ENCODE measurements at regions of chr13 and their contacts with region 1.

Region 1: GRCh38 chr13:42110410-42111155 is 62.1 kb downstream of the DGKH start:
- DNase-seq: no peak
- H3K4me3 ChIP-seq: no peak overlapping the region
- H3K27ac ChIP-seq: no peak overlapping the region
- H3K4me1 ChIP-seq: peaks cover 0 to 25% (median 6%) of the 10 kb centered on the region in 4 donors
- H3K27me3 ChIP-seq: no peaks in the 10 kb centered on the region
- CTCF ChIP-seq: peak; percentile 70 to 89

Region 2: GRCh38 chr13:41678249-41678648 is 432.3 kb before region 1 on chr13:
- intact Hi-C with region 1: loop called (anchors 5 kb)
- DNase-seq: no peak
- H3K4me3 ChIP-seq: no peak overlapping the region
- H3K27ac ChIP-seq: peak overlapping the region; percentile 35 to 46
- H3K4me1 ChIP-seq: peaks cover 0 to 19% (median 10%) of the 10 kb centered on the region in 4 donors
- H3K27me3 ChIP-seq: no peaks in the 10 kb centered on the region
- CTCF ChIP-seq: no peak

Region 3: DNA sequence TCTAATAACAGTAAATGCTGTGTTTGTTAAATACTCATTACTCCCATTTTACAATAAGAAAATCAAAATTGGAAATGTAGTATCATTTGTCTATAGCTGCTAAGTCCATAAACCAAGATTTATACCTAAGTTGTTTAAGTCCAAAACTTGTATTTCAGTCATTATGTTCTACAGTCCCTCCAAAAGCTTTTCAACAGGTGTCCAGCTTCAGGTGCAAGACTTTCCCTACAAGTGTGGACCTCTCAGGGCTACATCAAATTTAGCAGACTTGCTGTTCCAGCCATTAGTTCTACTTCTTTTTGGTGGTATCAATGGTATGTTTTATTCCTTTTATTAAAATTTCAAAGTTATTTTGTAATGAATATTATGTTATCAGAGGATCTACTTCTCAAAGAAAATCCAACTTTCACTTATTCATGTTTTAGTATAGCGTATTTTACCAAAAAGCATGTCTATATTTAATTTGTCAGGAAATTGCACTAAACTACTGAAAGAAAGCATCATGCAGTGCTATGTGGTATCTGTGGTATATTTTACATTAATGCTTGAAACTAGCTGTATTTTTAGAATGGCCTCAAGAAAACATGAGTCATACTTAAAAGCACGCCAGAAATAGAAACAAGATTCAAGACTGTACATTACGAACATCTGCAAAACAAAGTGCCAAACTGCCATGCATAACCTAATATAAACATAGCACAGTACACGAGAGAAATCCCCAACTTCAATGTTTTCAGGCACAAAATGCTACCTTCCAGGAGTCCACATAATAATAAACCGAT is 194.2 kb before region 1 on chr13:
- intact Hi-C with region 1: no loop called
- DNase-seq: no peak
- H3K4me3 ChIP-seq: no peak overlapping the region
- H3K27ac ChIP-seq: no peak overlapping the region
- H3K4me1 ChIP-seq: peaks cover 0 to 41% (median 16%) of the 10 kb centered on the region in 4 donors
- H3K27me3 ChIP-seq: no peaks in the 10 kb centered on the region
- CTCF ChIP-seq: no peak

Region 4: GRCh38 chr13:42561752-42562467 is 451.3 kb after region 1 on chr13:
- intact Hi-C with region 1: no loop called
- DNase-seq: no peak
- H3K4me3 ChIP-seq: no peak overlapping the region
- H3K27ac ChIP-seq: no peak overlapping the region
- H3K4me1 ChIP-seq: no peaks in the 10 kb centered on the region
- H3K27me3 ChIP-seq: no peaks in the 10 kb centered on the region
- CTCF ChIP-seq: no peak

Measured in tibial artery (tissue), 4 donors.